ENCODE measurements at regions of chr1 and their contacts with region 1.

Region 1: GRCh38 chr1:150082494-150082893 is 14.9 kb downstream of the VPS45 start:
- DNase-seq: no peak
- ATAC-seq: no peak
- H3K4me3 ChIP-seq: no peak overlapping the region
- H3K4me3 Mint-ChIP-seq: no peak overlapping the region
- H3K27ac ChIP-seq: no peak overlapping the region
- H3K27ac Mint-ChIP-seq: no peak overlapping the region
- H3K4me1 ChIP-seq: no peaks in the 10 kb centered on the region
- H3K4me1 Mint-ChIP-seq: peaks cover 2% of the 10 kb centered on the region
- H3K27me3 ChIP-seq: no peaks in the 10 kb centered on the region
- H3K27me3 Mint-ChIP-seq: no peaks in the 10 kb centered on the region
- CTCF ChIP-seq: no peak

Region 2: GRCh38 chr1:150156868-150157603 is 74.5 kb after region 1 on chr1:
- CTCF ChIA-PET with region 1: interaction called, 332 read pairs
- POLR2A ChIA-PET with region 1: interaction called, 4 read pairs
- intact Hi-C with region 1: loop called in 1 of 2 experiments (anchors 2 kb)
- DNase-seq: no peak
- ATAC-seq: no peak
- H3K4me3 ChIP-seq: no peak overlapping the region
- H3K4me3 Mint-ChIP-seq: no peak overlapping the region
- H3K27ac ChIP-seq: no peak overlapping the region
- H3K27ac Mint-ChIP-seq: peak overlapping the region; percentile 46
- H3K4me1 ChIP-seq: peaks cover 44% of the 10 kb centered on the region
- H3K4me1 Mint-ChIP-seq: peaks cover 78% of the 10 kb centered on the region
- H3K27me3 ChIP-seq: no peaks in the 10 kb centered on the region
- H3K27me3 Mint-ChIP-seq: no peaks in the 10 kb centered on the region
- CTCF ChIP-seq: no peak

Region 3: GRCh38 chr1:150498342-150498741 is 415.8 kb after region 1 on chr1:
- CTCF ChIA-PET with region 1: no interaction called
- POLR2A ChIA-PET with region 1: no interaction called
- intact Hi-C with region 1: no loop called
- DNase-seq: no peak
- ATAC-seq: no peak
- H3K4me3 ChIP-seq: no peak overlapping the region
- H3K4me3 Mint-ChIP-seq: no peak overlapping the region
- H3K27ac ChIP-seq: no peak overlapping the region
- H3K27ac Mint-ChIP-seq: no peak overlapping the region
- H3K4me1 ChIP-seq: no peaks in the 10 kb centered on the region
- H3K4me1 Mint-ChIP-seq: no peaks in the 10 kb centered on the region
- H3K27me3 ChIP-seq: no peaks in the 10 kb centered on the region
- H3K27me3 Mint-ChIP-seq: no peaks in the 10 kb centered on the region
- CTCF ChIP-seq: no peak